ENCODE measurements at regions of chr19 and their contacts with region 1.

Region 1: GRCh38 chr19:43754503-43755255 is at the start of gene SMG9:
- DNase-seq: peak; percentile 95 to 99 (median 99)
- ATAC-seq: peak; percentile 80
- H3K4me3 ChIP-seq: peak within 1 kb of the TSS; percentile 71 to 72
- H3K4me3 Mint-ChIP-seq: peak within 1 kb of the TSS; percentile 92
- H3K27ac ChIP-seq: peak within 1 kb of the TSS; percentile 85 to 97
- H3K27ac Mint-ChIP-seq: peak within 1 kb of the TSS; percentile 98
- H3K4me1 ChIP-seq: peaks cover 21% of the 10 kb centered on the region
- H3K4me1 Mint-ChIP-seq: peaks cover 46% of the 10 kb centered on the region
- H3K27me3 ChIP-seq: no peaks in the 10 kb centered on the region
- H3K27me3 Mint-ChIP-seq: no peaks in the 10 kb centered on the region
- CTCF ChIP-seq: no peak
- total RNA-seq, gene SMG9: 32.2 to 34.3 TPM

Region 2: GRCh38 chr19:43463381-43464136 is 291.1 kb before region 1 on chr19:
- CTCF ChIA-PET with region 1: no interaction called
- POLR2A ChIA-PET with region 1: no interaction called
- intact Hi-C with region 1: loop called (anchors 1 to 10 kb)
- DNase-seq: peak; percentile 99 to 100 (median 99)
- ATAC-seq: peak; percentile 79
- H3K4me3 ChIP-seq: peak overlapping the region; percentile 75 to 89
- H3K4me3 Mint-ChIP-seq: peak overlapping the region; percentile 93
- H3K27ac ChIP-seq: peak overlapping the region; percentile 85 to 91
- H3K27ac Mint-ChIP-seq: peak overlapping the region; percentile 98
- H3K4me1 ChIP-seq: peaks cover 29% of the 10 kb centered on the region
- H3K4me1 Mint-ChIP-seq: peaks cover 53% of the 10 kb centered on the region
- H3K27me3 ChIP-seq: no peaks in the 10 kb centered on the region
- H3K27me3 Mint-ChIP-seq: no peaks in the 10 kb centered on the region
- CTCF ChIP-seq: no peak

Region 3: GRCh38 chr19:43619262-43620060 is 135.2 kb before region 1 on chr19 and contains the start of gene ZNF428:
- CTCF ChIA-PET with region 1: no interaction called
- POLR2A ChIA-PET with region 1: no interaction called
- intact Hi-C with region 1: loop called (anchors 1 to 2 kb)
- DNase-seq: peak; percentile 61 to 95 (median 86)
- ATAC-seq: peak; percentile 88
- H3K4me3 ChIP-seq: peak within 1 kb of the TSS; percentile 97 to 98
- H3K4me3 Mint-ChIP-seq: peak within 1 kb of the TSS; percentile 96
- H3K27ac ChIP-seq: peak within 1 kb of the TSS; percentile 78 to 90
- H3K27ac Mint-ChIP-seq: peak within 1 kb of the TSS; percentile 97
- H3K4me1 ChIP-seq: peaks cover 25% of the 10 kb centered on the region
- H3K4me1 Mint-ChIP-seq: peaks cover 32% of the 10 kb centered on the region
- H3K27me3 ChIP-seq: no peaks in the 10 kb centered on the region
- H3K27me3 Mint-ChIP-seq: no peaks in the 10 kb centered on the region
- CTCF ChIP-seq: no peak
- total RNA-seq, gene ZNF428: 31.8 to 33.3 TPM

Region 4: GRCh38 chr19:43639519-43640423 is 114.9 kb before region 1 on chr19 and contains the start of gene CADM4:
- CTCF ChIA-PET with region 1: no interaction called
- POLR2A ChIA-PET with region 1: no interaction called
- intact Hi-C with region 1: no loop called
- DNase-seq: peak in 8 of 9 experiments; percentile 28 to 72 (median 53)
- ATAC-seq: peak; percentile 87
- H3K4me3 ChIP-seq: peak within 1 kb of the TSS; percentile 49 to 62
- H3K4me3 Mint-ChIP-seq: peak within 1 kb of the TSS; percentile 85
- H3K27ac ChIP-seq: no peak within 1 kb of the TSS
- H3K27ac Mint-ChIP-seq: no peak within 1 kb of the TSS
- H3K4me1 ChIP-seq: peaks cover 11% of the 10 kb centered on the region
- H3K4me1 Mint-ChIP-seq: peaks cover 16% of the 10 kb centered on the region
- H3K27me3 ChIP-seq: peaks cover 9 to 19% of the 10 kb centered on the region in 2 experiments
- H3K27me3 Mint-ChIP-seq: peaks cover 33% of the 10 kb centered on the region
- CTCF ChIP-seq: no peak
- total RNA-seq, gene CADM4: 0.19 TPM in 1 of 2 experiments, not detected in the other

Region 5: GRCh38 chr19:43743022-43743421 is 11.7 kb before region 1 on chr19:
- CTCF ChIA-PET with region 1: interaction called, 15 read pairs
- POLR2A ChIA-PET with region 1: interaction called, 3 read pairs
- intact Hi-C with region 1: no loop called
- DNase-seq: no peak
- ATAC-seq: no peak
- H3K4me3 ChIP-seq: no peak overlapping the region
- H3K4me3 Mint-ChIP-seq: no peak overlapping the region
- H3K27ac ChIP-seq: no peak overlapping the region
- H3K27ac Mint-ChIP-seq: no peak overlapping the region
- H3K4me1 ChIP-seq: no peaks in the 10 kb centered on the region
- H3K4me1 Mint-ChIP-seq: peaks cover 8% of the 10 kb centered on the region
- H3K27me3 ChIP-seq: no peaks in the 10 kb centered on the region
- H3K27me3 Mint-ChIP-seq: no peaks in the 10 kb centered on the region
- CTCF ChIP-seq: no peak

Region 6: GRCh38 chr19:43774103-43774939 is 19.6 kb after region 1 on chr19:
- CTCF ChIA-PET with region 1: no interaction called
- POLR2A ChIA-PET with region 1: interaction called, 5 read pairs
- intact Hi-C with region 1: loop called in 1 of 2 experiments (anchors 1 kb)
- DNase-seq: no peak
- ATAC-seq: no peak
- H3K4me3 ChIP-seq: no peak overlapping the region
- H3K4me3 Mint-ChIP-seq: no peak overlapping the region
- H3K27ac ChIP-seq: no peak overlapping the region
- H3K27ac Mint-ChIP-seq: no peak overlapping the region
- H3K4me1 ChIP-seq: peaks cover 29% of the 10 kb centered on the region
- H3K4me1 Mint-ChIP-seq: peaks cover 36% of the 10 kb centered on the region
- H3K27me3 ChIP-seq: no peaks in the 10 kb centered on the region
- H3K27me3 Mint-ChIP-seq: no peaks in the 10 kb centered on the region
- CTCF ChIP-seq: no peak

Region 7: DNA sequence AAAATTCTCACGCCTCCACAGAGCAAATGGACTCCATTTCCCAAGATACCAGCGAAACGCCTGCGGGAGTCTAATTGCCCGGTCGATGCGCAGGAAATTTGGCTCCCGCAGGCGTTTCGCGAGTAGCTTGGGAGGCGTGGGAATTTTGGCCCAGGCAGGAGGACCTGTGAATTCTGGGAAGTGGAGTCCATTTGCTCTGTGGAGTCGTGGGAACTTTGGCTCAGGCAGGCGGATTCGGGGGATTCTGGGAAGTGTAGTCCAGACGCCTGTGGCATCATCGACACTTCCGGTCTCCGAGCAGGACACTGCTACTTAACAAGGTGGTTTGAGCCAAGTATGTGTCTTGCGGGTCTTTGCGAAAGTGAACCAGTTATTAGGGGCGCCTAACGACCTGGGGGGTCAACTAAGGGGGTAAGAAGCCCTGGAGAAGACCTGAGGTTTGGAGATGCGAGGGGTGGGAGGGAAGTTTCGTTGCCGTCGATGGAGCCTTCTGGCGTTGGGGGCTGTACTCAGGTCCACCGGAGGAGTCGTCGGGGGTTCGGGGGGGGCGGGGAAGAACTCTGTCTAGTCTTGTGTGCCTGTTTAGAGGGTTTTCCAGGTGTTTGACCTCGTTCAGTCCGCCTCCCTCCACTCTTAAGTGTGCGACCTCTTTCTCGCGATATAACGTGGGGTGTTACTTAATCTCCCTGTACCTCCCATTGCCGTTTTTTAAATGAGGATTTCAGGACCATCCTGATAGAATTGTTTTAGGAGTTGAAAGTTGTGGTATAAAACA is 229.4 kb after region 1 on chr19 and contains the start of gene ZNF155:
- CTCF ChIA-PET with region 1: no interaction called
- POLR2A ChIA-PET with region 1: no interaction called
- intact Hi-C with region 1: no loop called
- DNase-seq: peak; percentile 28 to 89 (median 64)
- ATAC-seq: peak; percentile 86
- H3K4me3 ChIP-seq: peak within 1 kb of the TSS; percentile 76 to 92
- H3K4me3 Mint-ChIP-seq: peak within 1 kb of the TSS; percentile 96
- H3K27ac ChIP-seq: peak within 1 kb of the TSS; percentile 61 to 65
- H3K27ac Mint-ChIP-seq: peak within 1 kb of the TSS; percentile 92
- H3K4me1 ChIP-seq: no peaks in the 10 kb centered on the region
- H3K4me1 Mint-ChIP-seq: peaks cover 15% of the 10 kb centered on the region
- H3K27me3 ChIP-seq: no peaks in the 10 kb centered on the region
- H3K27me3 Mint-ChIP-seq: no peaks in the 10 kb centered on the region
- CTCF ChIP-seq: no peak
- total RNA-seq, gene ZNF155: 3.4 to 3.5 TPM

Region 8: DNA sequence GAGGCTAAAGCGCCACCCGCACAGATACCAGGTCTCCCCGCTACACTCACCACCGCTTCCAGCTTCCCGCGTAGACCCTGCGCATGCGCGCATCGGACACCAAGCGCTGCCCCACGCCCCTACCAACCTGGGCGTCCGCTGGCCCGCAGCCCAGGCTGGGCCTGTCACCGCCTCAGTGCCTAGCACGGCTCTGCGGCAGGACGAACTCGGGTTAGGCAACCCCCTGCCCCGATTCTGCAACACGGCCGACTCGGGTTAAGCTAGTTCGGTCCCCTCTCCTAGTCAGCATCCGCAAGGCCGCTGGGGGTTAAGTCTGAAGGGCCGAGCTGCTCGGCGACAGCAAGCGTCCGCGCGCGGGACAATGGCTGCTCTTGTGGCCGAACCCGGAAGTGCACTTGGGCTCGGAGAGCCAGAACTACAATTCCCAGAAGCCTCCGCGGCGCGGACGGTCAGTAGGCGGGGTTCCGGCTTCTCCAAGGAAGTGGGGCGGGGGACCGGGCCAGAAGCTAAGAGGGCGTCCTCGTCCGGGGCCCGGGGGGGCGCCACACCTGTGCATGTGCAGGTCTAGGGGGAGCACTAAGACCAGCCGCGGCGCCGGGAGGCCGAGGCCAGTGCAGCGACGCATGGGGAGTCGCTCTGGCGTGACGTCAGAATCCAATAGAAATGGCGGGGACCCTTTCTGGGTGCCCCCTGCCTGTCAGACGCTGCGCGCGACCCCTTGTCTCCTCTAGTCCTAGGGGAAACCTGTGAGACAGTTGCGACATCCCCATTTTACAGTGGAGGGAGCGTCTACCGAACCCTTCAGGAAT is 745.7 kb after region 1 on chr19 and contains the start of gene ZNF180:
- CTCF ChIA-PET with region 1: no interaction called
- POLR2A ChIA-PET with region 1: no interaction called
- intact Hi-C with region 1: loop called in 1 of 2 experiments (anchors 5 kb)
- DNase-seq: peak; percentile 89 to 98 (median 96)
- ATAC-seq: peak; percentile 96
- H3K4me3 ChIP-seq: peak within 1 kb of the TSS; percentile 86 to 90
- H3K4me3 Mint-ChIP-seq: peak within 1 kb of the TSS; percentile 92
- H3K27ac ChIP-seq: peak within 1 kb of the TSS; percentile 60 to 77
- H3K27ac Mint-ChIP-seq: peak within 1 kb of the TSS; percentile 92
- H3K4me1 ChIP-seq: peaks cover 21% of the 10 kb centered on the region
- H3K4me1 Mint-ChIP-seq: peaks cover 34% of the 10 kb centered on the region
- H3K27me3 ChIP-seq: no peaks in the 10 kb centered on the region
- H3K27me3 Mint-ChIP-seq: peaks cover 10% of the 10 kb centered on the region
- CTCF ChIP-seq: peak; percentile 35
- total RNA-seq, gene ZNF180: 8.5 to 8.8 TPM

Measured in CD8-positive, alpha-beta T cell (primary cell).